BJ (cell line): ENCODE measurements at regions of chr5 and their contacts with region 1.

Region 1: GRCh38 chr5:122076664-122077365 is 1.2 kb downstream of the LOX start:
- DNase-seq: no peak
- H3K4me3 ChIP-seq: peak overlapping the region; percentile 85
- H3K27me3 ChIP-seq: no peaks in the 10 kb centered on the region
- CTCF ChIP-seq: peak; percentile 98

Region 2: DNA sequence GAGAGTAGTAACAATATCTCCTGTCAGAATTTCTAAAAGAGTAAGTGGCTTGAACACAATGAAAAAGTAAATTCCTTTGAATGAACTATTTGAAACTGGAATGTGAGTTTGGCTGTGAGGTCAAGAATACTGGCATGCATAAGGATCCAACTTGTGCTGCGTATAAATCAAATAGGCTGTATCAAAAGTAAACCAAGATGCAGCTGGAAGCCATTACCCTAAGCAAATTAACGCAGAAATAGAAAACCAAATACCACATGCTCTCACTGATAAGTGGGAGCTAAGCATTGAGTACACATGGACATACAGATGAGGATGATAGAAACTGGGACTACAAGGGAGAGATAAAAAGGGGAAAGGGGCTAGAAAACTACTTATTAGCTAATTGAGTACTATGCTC is 139.1 kb before region 1 on chr5:
- CTCF ChIA-PET with region 1: no interaction called
- POLR2A ChIA-PET with region 1: no interaction called
- DNase-seq: no peak
- H3K4me3 ChIP-seq: no peak overlapping the region
- H3K27me3 ChIP-seq: no peaks in the 10 kb centered on the region
- CTCF ChIP-seq: no peak

Region 3: DNA sequence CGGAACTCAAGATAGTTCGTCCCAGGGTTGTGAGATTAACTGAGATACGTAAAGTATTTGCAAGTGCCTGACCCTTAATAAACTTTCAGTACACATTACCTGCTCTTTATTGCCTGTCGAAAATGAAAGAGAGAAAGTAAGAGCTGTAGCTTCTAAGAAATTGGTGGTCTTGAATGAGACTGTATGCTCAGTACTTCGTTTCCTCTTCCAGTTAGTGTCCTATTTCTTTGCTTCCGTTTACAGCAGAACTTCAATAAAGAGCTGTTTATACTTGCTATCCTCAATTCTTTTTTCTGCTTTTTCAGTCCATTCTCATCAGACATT is 114.5 kb before region 1 on chr5:
- CTCF ChIA-PET with region 1: interaction called, 21 read pairs
- POLR2A ChIA-PET with region 1: interaction called, 3 read pairs
- DNase-seq: no peak
- H3K4me3 ChIP-seq: peak overlapping the region; percentile 94
- H3K27me3 ChIP-seq: no peaks in the 10 kb centered on the region
- CTCF ChIP-seq: no peak

Region 4: GRCh38 chr5:121968910-121969607 is 107.8 kb before region 1 on chr5:
- CTCF ChIA-PET with region 1: interaction called, 13 read pairs
- POLR2A ChIA-PET with region 1: interaction called, 5 read pairs
- DNase-seq: peak; percentile 97
- H3K4me3 ChIP-seq: no peak overlapping the region
- H3K27me3 ChIP-seq: no peaks in the 10 kb centered on the region
- CTCF ChIP-seq: no peak

Region 5: GRCh38 chr5:122056913-122057312 is 19.9 kb before region 1 on chr5:
- CTCF ChIA-PET with region 1: interaction called, 11 read pairs
- POLR2A ChIA-PET with region 1: no interaction called
- DNase-seq: no peak
- H3K4me3 ChIP-seq: no peak overlapping the region
- H3K27me3 ChIP-seq: no peaks in the 10 kb centered on the region
- CTCF ChIP-seq: no peak

Region 6: GRCh38 chr5:122091936-122092600 is 15.3 kb after region 1 on chr5:
- CTCF ChIA-PET with region 1: interaction called, 71 read pairs
- POLR2A ChIA-PET with region 1: interaction called, 3 read pairs
- DNase-seq: no peak
- H3K4me3 ChIP-seq: no peak overlapping the region
- H3K27me3 ChIP-seq: no peaks in the 10 kb centered on the region
- CTCF ChIP-seq: peak; percentile 62

Region 7: GRCh38 chr5:122101636-122102285 is 24.9 kb after region 1 on chr5:
- CTCF ChIA-PET with region 1: interaction called, 71 read pairs
- POLR2A ChIA-PET with region 1: interaction called, 3 read pairs
- DNase-seq: no peak
- H3K4me3 ChIP-seq: no peak overlapping the region
- H3K27me3 ChIP-seq: no peaks in the 10 kb centered on the region
- CTCF ChIP-seq: peak; percentile 64

Region 8: GRCh38 chr5:122118356-122118948 is 41.6 kb after region 1 on chr5:
- CTCF ChIA-PET with region 1: no interaction called
- POLR2A ChIA-PET with region 1: no interaction called
- DNase-seq: no peak
- H3K4me3 ChIP-seq: no peak overlapping the region
- H3K27me3 ChIP-seq: no peaks in the 10 kb centered on the region
- CTCF ChIP-seq: no peak

Region 9: DNA sequence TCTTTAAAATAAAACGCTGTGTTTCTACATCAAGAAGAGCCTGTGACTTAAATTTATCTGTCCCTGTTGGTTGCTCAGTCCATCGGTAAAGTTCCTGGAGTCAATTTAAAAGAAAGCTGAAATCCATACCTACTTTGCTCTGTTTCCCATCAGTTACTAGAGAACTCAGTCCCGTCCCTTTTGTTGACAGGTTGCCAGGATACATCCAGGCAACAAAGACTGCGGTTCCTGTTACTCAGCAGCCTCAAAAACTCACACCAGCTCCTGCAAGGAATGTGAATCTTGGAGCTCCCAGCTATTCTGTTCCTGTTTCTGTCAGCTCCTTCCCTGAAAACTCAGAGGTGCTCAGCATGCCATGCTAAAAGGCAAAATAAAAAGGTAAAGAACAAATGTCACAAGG is 52.5 kb after region 1 on chr5 and contains the start of gene ZNF474:
- CTCF ChIA-PET with region 1: no interaction called
- POLR2A ChIA-PET with region 1: no interaction called
- DNase-seq: peak; percentile 93
- H3K4me3 ChIP-seq: no peak within 1 kb of the TSS
- H3K27me3 ChIP-seq: no peaks in the 10 kb centered on the region
- CTCF ChIP-seq: no peak
- polyA plus RNA-seq, gene ZNF474: 0.06 and 0.22 TPM in 2 replicates

Region 10: GRCh38 chr5:122156724-122157325 is 80.0 kb after region 1 on chr5:
- CTCF ChIA-PET with region 1: interaction called, 17 read pairs
- POLR2A ChIA-PET with region 1: interaction called, 5 read pairs
- DNase-seq: no peak
- H3K4me3 ChIP-seq: no peak overlapping the region
- H3K27me3 ChIP-seq: no peaks in the 10 kb centered on the region
- CTCF ChIP-seq: peak; percentile 50